BJ (cell line): ENCODE measurements at regions of chr2 and their contacts with region 1.

Region 1: DNA sequence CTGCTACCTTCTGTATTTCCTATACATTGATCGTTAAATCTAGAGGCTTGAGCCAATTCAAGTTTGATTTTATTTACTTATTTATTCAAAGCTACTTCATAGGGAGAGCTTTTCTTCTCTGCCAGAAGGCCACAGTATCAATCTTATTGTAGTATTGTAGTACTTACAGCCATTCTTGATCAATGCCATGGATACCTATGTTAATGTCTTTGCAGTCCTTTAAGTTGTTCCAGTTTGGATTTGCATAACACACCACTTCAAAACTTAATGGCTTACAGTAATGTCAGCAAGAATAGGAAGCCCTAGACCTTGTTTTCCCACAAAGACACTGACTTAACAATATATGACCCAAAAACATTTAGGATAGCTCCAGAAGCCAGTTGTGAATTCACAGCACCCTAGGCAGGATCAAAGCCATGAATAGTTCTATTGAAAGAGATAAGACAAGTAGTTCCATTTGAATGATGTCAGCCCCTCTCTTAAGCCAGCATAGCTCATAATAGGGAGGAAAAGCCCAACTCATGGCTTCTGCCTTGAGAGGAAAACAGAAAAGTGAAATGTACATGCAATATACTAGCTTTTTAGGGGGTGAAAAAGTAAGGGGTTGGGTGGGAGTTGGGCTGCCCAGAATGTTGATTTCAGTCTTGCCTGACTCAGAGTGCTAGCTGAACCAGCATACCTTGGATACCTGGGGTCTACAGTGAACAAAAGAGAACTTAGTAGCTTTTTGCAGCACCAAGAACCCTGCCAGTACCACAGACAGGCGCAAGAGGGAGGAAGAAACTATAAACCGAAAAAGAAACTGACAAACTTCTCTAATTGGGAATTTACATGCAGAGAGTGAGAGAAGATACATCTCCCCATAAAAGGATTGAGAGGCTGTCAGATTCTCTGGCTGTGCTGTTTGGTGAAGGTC is 101.4 kb downstream of the CAMKMT start:
- DNase-seq: no peak
- H3K4me3 ChIP-seq: no peak overlapping the region
- H3K27me3 ChIP-seq: no peaks in the 10 kb centered on the region
- CTCF ChIP-seq: no peak

Region 2: DNA sequence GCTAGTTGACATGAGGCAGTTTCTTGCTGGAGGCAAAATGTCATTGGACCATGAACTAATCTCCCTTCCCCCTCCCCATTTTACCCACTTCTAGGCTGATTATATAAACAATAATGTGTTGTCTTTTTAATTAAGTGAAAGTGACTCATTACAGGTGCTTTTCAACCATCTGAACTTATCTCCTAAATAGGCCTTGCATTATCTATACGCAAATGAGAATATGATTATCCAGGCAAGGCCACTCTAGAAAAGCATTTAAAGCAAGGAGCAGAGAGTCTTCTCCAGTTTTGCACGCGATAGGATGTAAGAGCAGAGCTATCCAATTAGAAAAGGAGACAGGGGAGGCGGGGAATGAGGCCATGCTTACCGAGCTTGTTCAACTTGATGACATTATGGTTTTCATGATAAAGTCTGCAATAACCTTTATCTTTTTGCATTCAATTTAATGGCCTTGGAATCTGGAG is 192.2 kb after region 1 on chr2:
- CTCF ChIA-PET with region 1: no interaction called
- POLR2A ChIA-PET with region 1: interaction called, 14 read pairs
- DNase-seq: no peak
- H3K4me3 ChIP-seq: no peak overlapping the region
- H3K27me3 ChIP-seq: no peaks in the 10 kb centered on the region
- CTCF ChIP-seq: no peak